Heart left ventricle (tissue), 16 donors: ENCODE measurements at regions of chr19 and their contacts with region 1.

Region 1: DNA sequence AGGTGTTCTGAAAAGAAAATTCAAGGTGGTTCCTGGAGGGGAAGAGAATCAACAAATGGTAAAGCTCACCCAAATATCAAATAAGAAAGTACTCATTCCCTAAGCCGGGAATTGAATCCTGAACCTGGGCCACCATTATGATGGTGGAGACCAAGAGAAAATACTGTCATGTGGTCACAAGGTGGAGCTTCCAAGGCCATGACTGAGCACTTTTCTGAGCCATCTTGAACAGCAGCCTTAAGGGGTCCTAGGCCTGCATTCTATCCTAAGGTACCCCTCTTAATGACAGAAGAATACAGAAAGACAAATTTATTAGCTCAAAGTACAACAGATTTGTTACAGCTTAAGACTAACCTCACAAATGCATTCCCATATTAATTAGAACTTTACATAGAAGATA is 9.6 kb downstream of the ZNF431 start:
- DNase-seq: no peak
- ATAC-seq: no peak
- H3K4me3 ChIP-seq: no peak overlapping the region
- H3K27ac ChIP-seq: no peak overlapping the region
- H3K4me1 ChIP-seq: peaks cover 0 to 11% (median 0%) of the 10 kb centered on the region in 12 donors
- H3K27me3 ChIP-seq: no peaks in the 10 kb centered on the region
- CTCF ChIP-seq: no peak
- POLR2A ChIP-seq: no peak

Region 2: GRCh38 chr19:21092109-21092508 is 59.4 kb before region 1 on chr19:
- intact Hi-C with region 1: loop called in 1 of 10 experiments (anchors 2 kb)
- DNase-seq: no peak
- ATAC-seq: no peak
- H3K4me3 ChIP-seq: no peak overlapping the region
- H3K27ac ChIP-seq: no peak overlapping the region
- H3K4me1 ChIP-seq: peaks cover 0 to 13% (median 0%) of the 10 kb centered on the region in 12 donors
- H3K27me3 ChIP-seq: no peaks in the 10 kb centered on the region
- CTCF ChIP-seq: no peak
- POLR2A ChIP-seq: no peak

Region 3: DNA sequence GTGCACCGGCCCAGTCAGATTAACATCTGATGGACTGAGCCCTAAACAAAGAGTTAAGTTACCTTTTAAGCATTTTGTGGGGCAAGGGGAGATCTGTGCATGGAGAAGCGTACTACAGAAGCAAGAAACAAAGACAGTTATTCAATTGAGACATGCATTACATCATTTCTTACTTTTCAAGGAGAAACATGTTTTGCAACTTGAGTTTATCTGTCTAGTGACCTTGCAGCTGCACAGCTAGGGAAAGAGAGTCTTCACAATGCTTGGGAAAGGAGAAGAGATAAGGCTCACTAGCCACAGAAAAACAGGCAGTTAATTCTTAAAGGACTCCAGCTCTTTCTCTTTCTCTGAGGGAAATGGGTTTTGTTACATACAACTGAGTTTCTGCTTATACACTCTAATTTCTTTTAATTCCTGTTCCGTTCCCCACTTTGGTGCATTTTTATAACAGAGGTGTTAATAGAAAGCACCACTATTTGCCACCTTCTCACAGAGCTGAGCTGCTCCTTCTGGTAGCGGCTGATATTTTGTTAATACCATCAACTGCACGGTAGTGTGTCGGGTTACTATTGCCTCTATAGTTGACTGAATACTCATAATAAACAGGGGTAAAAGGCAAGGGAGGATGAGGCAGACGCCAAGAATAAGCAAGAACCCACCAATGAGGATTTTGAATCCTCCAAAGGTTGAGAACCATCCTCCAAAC is 46.3 kb after region 1 on chr19:
- intact Hi-C with region 1: no loop called
- DNase-seq: no peak
- ATAC-seq: no peak
- H3K4me3 ChIP-seq: no peak overlapping the region
- H3K27ac ChIP-seq: peak overlapping the region in 4 of 12 donors; percentile 1 to 56 (median 20)
- H3K4me1 ChIP-seq: peaks cover 0 to 6% (median 0%) of the 10 kb centered on the region in 12 donors
- H3K27me3 ChIP-seq: no peaks in the 10 kb centered on the region
- CTCF ChIP-seq: no peak
- POLR2A ChIP-seq: no peak

Region 4: GRCh38 chr19:21210037-21210621 is 58.7 kb after region 1 on chr19:
- intact Hi-C with region 1: no loop called
- DNase-seq: no peak
- ATAC-seq: no peak
- H3K4me3 ChIP-seq: no peak overlapping the region
- H3K27ac ChIP-seq: no peak overlapping the region
- H3K4me1 ChIP-seq: no peaks in the 10 kb centered on the region
- H3K27me3 ChIP-seq: no peaks in the 10 kb centered on the region
- CTCF ChIP-seq: no peak
- POLR2A ChIP-seq: no peak